HCT116 (cell line): ENCODE measurements at regions of chr11 and their contacts with region 1.

Region 1: GRCh38 chr11:59822989-59823566 is 12.5 kb upstream of the MRPL16 start:
- DNase-seq: peak; percentile 69
- ATAC-seq: peak; percentile 99
- H3K4me3 ChIP-seq: no peak overlapping the region
- H3K27ac ChIP-seq: no peak overlapping the region
- H3K4me1 ChIP-seq: peaks cover 0 to 4% of the 10 kb centered on the region in 2 experiments; a peak in 1 of 4 replicates
- H3K27me3 ChIP-seq: no peaks in the 10 kb centered on the region
- CTCF ChIP-seq: peak; percentile 63 to 90 (median 87)
- POLR2A ChIP-seq: no peak
- RAD21 ChIP-seq: peak; percentile 94

Region 2: GRCh38 chr11:59247531-59248227 is 575.4 kb before region 1 on chr11:
- CTCF ChIA-PET with region 1: no interaction called
- POLR2A ChIA-PET with region 1: no interaction called
- RAD21 ChIA-PET with region 1: no interaction called
- intact Hi-C with region 1: no loop called
- DNase-seq: no peak
- ATAC-seq: no peak
- H3K4me3 ChIP-seq: no peak overlapping the region
- H3K27ac ChIP-seq: no peak overlapping the region
- H3K4me1 ChIP-seq: peaks cover 0 to 2% of the 10 kb centered on the region in 2 experiments; a peak in 1 of 4 replicates
- H3K27me3 ChIP-seq: no peaks in the 10 kb centered on the region
- CTCF ChIP-seq: no peak
- POLR2A ChIP-seq: no peak
- RAD21 ChIP-seq: no peak

Region 3: GRCh38 chr11:59918987-59919589 is 96.0 kb after region 1 on chr11:
- CTCF ChIA-PET with region 1: interaction called, 37 read pairs
- POLR2A ChIA-PET with region 1: no interaction called
- RAD21 ChIA-PET with region 1: interaction called, 3 to 9 read pairs
- intact Hi-C with region 1: loop called (anchors 1 kb)
- DNase-seq: peak; percentile 56
- ATAC-seq: peak; percentile 85
- H3K4me3 ChIP-seq: no peak overlapping the region
- H3K27ac ChIP-seq: no peak overlapping the region
- H3K4me1 ChIP-seq: no peaks in the 10 kb centered on the region
- H3K27me3 ChIP-seq: no peaks in the 10 kb centered on the region
- CTCF ChIP-seq: peak; percentile 60 to 81 (median 77)
- POLR2A ChIP-seq: no peak
- RAD21 ChIP-seq: peak; percentile 89

Region 4: GRCh38 chr11:60130496-60130895 is 307.4 kb after region 1 on chr11:
- CTCF ChIA-PET with region 1: interaction called, 4 read pairs
- POLR2A ChIA-PET with region 1: no interaction called
- RAD21 ChIA-PET with region 1: no interaction called
- intact Hi-C with region 1: loop called (anchors 1 kb)
- DNase-seq: peak; percentile 47
- ATAC-seq: peak; percentile 97
- H3K4me3 ChIP-seq: no peak overlapping the region
- H3K27ac ChIP-seq: no peak overlapping the region
- H3K4me1 ChIP-seq: peaks cover 3 to 16% of the 10 kb centered on the region in 2 experiments; a peak in 3 of 4 replicates
- H3K27me3 ChIP-seq: no peaks in the 10 kb centered on the region
- CTCF ChIP-seq: peak; percentile 50 to 65 (median 54); a peak in 5 of 6 replicates
- POLR2A ChIP-seq: no peak
- RAD21 ChIP-seq: peak; percentile 73

Region 5: DNA sequence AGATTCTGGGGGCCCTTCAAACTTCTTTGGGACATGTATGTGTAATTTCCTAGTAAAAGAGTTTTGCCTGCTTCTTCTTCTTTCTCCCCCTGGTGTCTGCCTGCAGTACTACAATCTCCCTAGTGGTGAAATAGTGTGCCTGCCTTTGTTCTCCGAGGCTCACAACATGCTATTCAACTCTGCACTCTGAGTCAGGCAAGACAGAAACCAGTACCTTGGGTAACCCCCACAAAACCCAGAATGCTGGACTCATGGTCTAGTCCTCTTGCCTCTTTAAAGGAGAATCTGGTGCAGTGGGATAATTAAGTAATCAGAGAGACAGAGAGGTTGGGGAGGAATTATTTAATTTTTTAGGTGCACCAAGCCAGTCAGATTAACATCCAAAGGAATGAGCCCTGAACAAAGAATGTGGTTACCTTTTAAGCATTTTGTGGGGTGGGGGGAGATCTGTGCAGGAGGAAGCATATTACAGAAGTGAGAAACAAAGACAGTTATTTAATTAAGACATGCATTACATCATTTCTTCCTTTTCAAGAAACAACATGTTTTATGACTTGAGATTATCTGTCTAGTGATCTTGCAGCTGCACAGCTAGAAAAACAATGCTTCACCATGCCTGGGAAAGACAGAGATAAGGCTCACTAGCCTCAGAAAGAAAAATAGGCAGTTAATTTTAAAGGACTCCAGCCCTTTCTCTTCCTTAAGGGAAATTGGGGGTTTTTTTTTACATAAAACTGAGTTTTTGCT is 370.8 kb after region 1 on chr11:
- CTCF ChIA-PET with region 1: no interaction called
- POLR2A ChIA-PET with region 1: no interaction called
- RAD21 ChIA-PET with region 1: no interaction called
- intact Hi-C with region 1: loop called (anchors 5 kb)
- DNase-seq: peak; percentile 56
- ATAC-seq: peak; percentile 96
- H3K4me3 ChIP-seq: no peak overlapping the region
- H3K27ac ChIP-seq: no peak overlapping the region
- H3K4me1 ChIP-seq: no peaks in the 10 kb centered on the region
- H3K27me3 ChIP-seq: no peaks in the 10 kb centered on the region
- CTCF ChIP-seq: peak; percentile 71 to 98 (median 93); a peak in 5 of 6 replicates
- POLR2A ChIP-seq: no peak
- RAD21 ChIP-seq: peak; percentile 46

Region 6: DNA sequence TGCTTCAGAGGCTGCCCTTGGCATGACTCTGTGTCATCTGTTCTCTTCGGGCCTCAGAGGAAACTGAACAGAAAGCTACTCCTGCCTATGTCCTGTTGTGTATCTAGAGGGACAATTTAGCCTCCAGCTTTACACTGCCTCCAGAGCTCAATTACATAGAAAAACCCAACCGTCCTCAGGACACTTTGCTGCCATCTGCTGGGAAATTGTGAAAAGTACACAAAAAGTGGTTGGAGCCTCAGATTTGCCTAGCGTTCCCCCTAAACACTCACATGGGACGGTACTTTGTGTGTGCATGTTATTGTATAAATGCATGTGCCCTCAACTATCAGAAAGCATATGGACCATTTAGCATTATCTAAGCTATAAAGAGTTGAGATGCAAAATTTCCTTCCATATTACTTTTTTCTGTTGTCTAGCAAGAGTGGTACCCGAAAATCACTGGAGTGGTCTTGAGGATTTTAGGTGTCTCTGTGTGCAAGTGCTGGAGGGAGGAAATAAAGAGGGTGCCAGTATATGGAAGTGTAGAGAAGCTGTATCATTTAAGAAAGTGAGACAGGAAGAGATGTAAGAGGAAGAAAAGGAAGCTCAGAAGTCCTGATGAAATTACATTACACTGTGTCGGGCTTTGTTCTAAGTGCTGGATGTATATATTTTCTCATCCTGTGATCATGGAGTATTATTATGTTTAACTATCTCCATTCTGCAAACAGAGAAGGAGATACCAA is 428.6 kb after region 1 on chr11:
- CTCF ChIA-PET with region 1: interaction called, 13 read pairs
- POLR2A ChIA-PET with region 1: no interaction called
- RAD21 ChIA-PET with region 1: interaction called in 1 of 2 experiments, 5 read pairs
- intact Hi-C with region 1: loop called (anchors 2 kb)
- DNase-seq: peak; percentile 24
- ATAC-seq: peak; percentile 87
- H3K4me3 ChIP-seq: no peak overlapping the region
- H3K27ac ChIP-seq: no peak overlapping the region
- H3K4me1 ChIP-seq: no peaks in the 10 kb centered on the region
- H3K27me3 ChIP-seq: no peaks in the 10 kb centered on the region
- CTCF ChIP-seq: peak; percentile 39 to 60 (median 45); a peak in 5 of 6 replicates
- POLR2A ChIP-seq: no peak
- RAD21 ChIP-seq: peak; percentile 64